ENCODE measurements at regions of chr17 and their contacts with region 1.

Region 1: GRCh38 chr17:7856883-7857723 is at the start of gene NAA38:
- DNase-seq: peak; percentile 93 to 98
- ATAC-seq: peak; percentile 87 to 92 (median 90)
- H3K4me3 ChIP-seq: peak within 1 kb of the TSS; percentile 60 to 72 (median 68)
- H3K27ac ChIP-seq: peak within 1 kb of the TSS; percentile 79 to 98 (median 93)
- H3K4me1 ChIP-seq: peaks cover under 1 to 53% (median 38%) of the 10 kb centered on the region in 9 donors
- H3K27me3 ChIP-seq: no peaks in the 10 kb centered on the region
- CTCF ChIP-seq: peak; percentile 14 to 80 (median 45)
- total RNA-seq, gene NAA38: 59.2 to 115 (median 73.0) TPM

Region 2: DNA sequence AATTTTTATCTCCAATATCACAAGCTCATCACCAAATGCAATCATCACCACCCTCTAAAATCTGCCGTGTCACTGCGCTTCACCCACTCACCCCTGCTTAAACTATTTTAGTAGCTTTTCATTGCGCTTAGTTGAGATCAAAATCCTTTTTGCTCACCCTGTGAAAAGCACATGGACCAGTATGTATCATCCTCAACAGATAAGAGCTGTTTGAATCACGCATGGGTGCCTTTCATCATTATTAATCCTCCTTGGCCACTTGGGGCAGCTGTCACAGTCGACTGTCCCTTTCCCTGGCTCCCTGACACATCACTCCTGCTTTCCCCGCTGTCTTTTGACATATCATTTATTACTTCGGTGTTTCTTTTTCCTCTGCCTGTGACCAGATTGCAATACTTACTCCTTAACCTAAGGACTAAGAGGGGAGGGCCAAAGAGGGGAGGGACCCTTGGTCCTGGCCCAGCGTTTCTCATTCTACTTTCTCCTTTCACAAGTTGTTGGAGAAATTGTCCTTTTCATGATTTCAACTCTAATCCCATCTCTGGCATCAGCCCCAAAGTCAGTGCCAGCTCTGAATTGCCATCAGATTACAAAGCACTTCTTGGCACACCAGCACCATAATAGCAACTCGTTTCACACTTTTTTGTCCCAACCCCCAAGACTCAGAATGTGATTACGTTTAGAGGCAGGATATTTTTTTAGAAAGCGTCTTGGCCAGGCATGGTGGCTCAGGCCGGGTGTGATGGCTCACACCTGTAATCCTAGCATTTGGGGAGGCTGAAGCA is 31.7 kb before region 1 on chr17:
- intact Hi-C with region 1: loop called in 5 of 10 experiments (anchors 1 to 5 kb)
- DNase-seq: no peak
- ATAC-seq: peak in 1 of 8 donors; percentile 20
- H3K4me3 ChIP-seq: no peak overlapping the region
- H3K27ac ChIP-seq: no peak overlapping the region
- H3K4me1 ChIP-seq: peaks cover 0 to 7% (median 0%) of the 10 kb centered on the region in 9 donors
- H3K27me3 ChIP-seq: peaks cover 0 to 5% (median 0%) of the 10 kb centered on the region in 7 donors
- CTCF ChIP-seq: peak in 4 of 9 donors; percentile 23 to 29 (median 26)

Region 3: DNA sequence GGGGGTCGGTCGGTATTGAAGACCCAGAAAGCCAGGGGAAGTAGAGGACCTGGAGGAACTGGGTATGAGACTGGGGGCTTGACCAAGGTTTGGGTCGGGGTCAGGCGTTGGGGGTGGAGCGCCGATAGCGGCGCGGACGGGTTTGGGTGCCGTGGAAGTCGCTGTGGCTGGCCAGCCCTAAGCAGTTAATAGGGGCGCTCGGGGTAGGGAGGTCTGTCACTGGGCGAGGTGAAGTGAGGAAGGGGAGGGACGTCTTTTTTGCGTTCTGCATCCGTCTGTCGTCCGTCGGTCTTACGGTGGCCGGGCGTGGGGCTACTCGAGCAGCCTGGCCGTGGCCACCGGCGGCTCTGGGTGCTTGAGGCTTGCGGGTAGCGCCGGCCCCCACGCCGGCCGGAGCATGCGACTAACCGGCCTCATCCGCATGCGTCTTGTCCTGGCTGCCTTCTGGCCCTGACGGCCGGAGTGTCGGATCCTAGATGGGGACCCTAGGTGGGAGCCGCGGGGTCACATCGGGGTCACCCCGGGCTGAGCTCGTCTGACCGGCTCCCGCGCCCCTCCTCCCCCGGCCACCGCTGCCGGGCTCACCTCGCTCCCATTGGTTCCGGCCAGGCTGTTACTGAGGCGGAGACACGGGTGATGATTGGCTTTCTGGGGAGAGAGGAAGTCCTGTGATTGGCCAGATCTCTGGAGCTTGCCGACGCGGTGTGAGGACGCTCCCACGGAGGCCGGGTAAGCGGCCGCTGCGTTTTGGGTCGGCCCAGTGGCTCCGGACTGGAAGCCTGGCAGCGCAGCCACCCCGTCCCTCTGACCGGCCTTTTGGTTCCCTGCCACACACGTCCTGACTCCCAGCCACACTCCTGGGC is 12.6 kb before region 1 on chr17:
- intact Hi-C with region 1: loop called in 2 of 10 experiments (anchors 2 kb)
- DNase-seq: peak; percentile 88 to 94
- ATAC-seq: peak; percentile 57 to 80 (median 71)
- H3K4me3 ChIP-seq: peak overlapping the region; percentile 68 to 90 (median 76)
- H3K27ac ChIP-seq: peak overlapping the region; percentile 90 to 100 (median 97)
- H3K4me1 ChIP-seq: peaks cover 12 to 48% (median 37%) of the 10 kb centered on the region in 9 donors
- H3K27me3 ChIP-seq: no peaks in the 10 kb centered on the region
- CTCF ChIP-seq: no peak

Region 4: GRCh38 chr17:7915611-7916382 is 58.7 kb after region 1 on chr17 and contains the start of gene RNF227:
- intact Hi-C with region 1: loop called in 1 of 10 experiments (anchors 5 kb)
- DNase-seq: peak; percentile 91 to 94
- ATAC-seq: peak; percentile 88 to 93 (median 91)
- H3K4me3 ChIP-seq: peak within 1 kb of the TSS; percentile 49 to 93 (median 65)
- H3K27ac ChIP-seq: peak within 1 kb of the TSS; percentile 70 to 98 (median 92)
- H3K4me1 ChIP-seq: peaks cover 3 to 35% (median 26%) of the 10 kb centered on the region in 9 donors
- H3K27me3 ChIP-seq: no peaks in the 10 kb centered on the region
- CTCF ChIP-seq: no peak
- total RNA-seq, gene RNF227: 0.15 to 1.6 (median 0.90) TPM

Measured in heart right ventricle (tissue), 16 donors.